Endothelial cell of umbilical vein (primary cell): ENCODE measurements at regions of chr19 and their contacts with region 1.

Region 1: GRCh38 chr19:49690656-49691242 is at the start of gene CPT1C:
- DNase-seq: peak; percentile 83
- H3K4me3 ChIP-seq: peak within 1 kb of the TSS; percentile 17 to 74 (median 59)
- H3K27ac ChIP-seq: no peak within 1 kb of the TSS
- H3K4me1 ChIP-seq: peaks cover 40% of the 10 kb centered on the region
- H3K27me3 ChIP-seq: no peaks in the 10 kb centered on the region
- CTCF ChIP-seq: no peak
- POLR2A ChIP-seq: peak; percentile 79
- total RNA-seq, gene CPT1C: 24.7 and 45.7 TPM in 2 replicates

Region 2: DNA sequence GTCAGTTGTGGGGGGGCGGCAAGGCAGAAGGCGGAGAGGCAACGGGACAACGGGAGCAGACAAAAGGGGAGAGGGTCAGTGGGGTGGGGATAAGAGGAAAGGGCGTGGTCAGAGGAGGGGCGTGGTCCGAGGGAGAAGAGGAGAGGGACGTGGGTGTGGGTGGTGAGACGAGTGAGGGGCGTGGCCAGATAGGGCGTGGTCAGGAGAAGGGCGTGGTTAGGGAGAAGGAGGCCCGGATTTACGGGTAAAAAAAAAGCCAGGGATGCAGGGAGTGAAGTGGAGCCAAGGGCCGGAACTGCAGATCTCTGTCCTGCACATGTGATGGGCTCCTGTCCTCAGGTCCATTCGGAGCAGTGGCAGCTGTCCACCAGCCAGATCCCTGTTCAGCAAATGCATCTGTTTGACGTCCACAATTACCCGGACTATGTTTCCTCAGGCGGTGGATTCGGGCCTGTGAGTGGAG is 21.7 kb after region 1 on chr19:
- CTCF ChIA-PET with region 1: interaction called, 3 read pairs
- POLR2A ChIA-PET with region 1: interaction called, 5 read pairs
- dilution Hi-C with region 1: no loop called
- intact Hi-C with region 1: loop called (anchors 2 kb)
- DNase-seq: no peak
- H3K4me3 ChIP-seq: no peak overlapping the region
- H3K27ac ChIP-seq: no peak overlapping the region
- H3K4me1 ChIP-seq: no peaks in the 10 kb centered on the region
- H3K27me3 ChIP-seq: no peaks in the 10 kb centered on the region
- CTCF ChIP-seq: no peak
- POLR2A ChIP-seq: no peak

Region 3: DNA sequence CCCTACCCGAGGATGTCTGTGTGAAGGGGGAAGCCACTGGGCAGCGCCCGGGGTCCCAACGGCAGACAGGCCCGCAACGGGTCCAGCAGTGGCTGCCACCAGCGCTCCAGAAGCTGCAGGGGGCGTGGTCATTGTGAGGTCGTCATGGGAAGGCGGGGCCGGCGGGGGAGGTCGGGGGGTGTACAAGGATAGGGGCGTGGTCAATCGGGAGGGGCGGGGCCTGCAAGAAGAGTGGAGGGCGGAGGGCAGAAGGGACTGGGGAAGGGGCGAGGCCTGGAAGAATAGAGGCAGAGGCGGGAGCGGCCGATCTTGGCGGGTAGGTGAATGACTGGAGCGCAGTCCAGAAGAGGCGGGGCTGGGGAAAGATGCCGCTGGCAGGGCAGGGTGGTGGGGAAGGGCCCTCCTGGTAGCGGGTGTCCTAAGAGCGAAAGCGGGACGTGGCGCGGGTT is 118.0 kb after region 1 on chr19:
- CTCF ChIA-PET with region 1: no interaction called
- POLR2A ChIA-PET with region 1: no interaction called
- dilution Hi-C with region 1: no loop called
- intact Hi-C with region 1: loop called (anchors 5 kb)
- DNase-seq: peak; percentile 85
- H3K4me3 ChIP-seq: peak overlapping the region; percentile 46 to 59 (median 59)
- H3K27ac ChIP-seq: no peak overlapping the region
- H3K4me1 ChIP-seq: peaks cover 15% of the 10 kb centered on the region
- H3K27me3 ChIP-seq: no peaks in the 10 kb centered on the region
- CTCF ChIP-seq: no peak
- POLR2A ChIP-seq: no peak